PC-9 (cell line): ENCODE measurements at regions of chr13 and their contacts with region 1.

Region 1: DNA sequence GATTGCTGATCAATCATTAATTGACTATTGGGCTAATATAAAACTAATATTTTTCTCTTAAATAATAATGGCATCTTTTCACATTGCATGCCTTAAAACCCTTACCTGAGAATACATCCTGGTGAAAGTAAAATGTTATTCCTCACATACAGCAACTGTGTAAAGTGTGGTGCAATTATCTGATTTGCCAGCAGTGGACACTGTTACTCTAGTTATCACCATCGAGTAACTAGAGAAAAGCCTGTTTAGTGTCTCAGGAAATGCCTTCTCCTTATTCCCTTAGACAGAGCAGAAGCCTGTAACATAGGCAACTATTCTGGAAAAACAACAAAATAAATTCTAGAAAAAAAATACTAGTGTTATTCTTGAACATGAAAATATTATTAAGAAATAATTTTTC is 459.8 kb downstream of the FGF14 start:
- DNase-seq: peak in 1 of 2 experiments; percentile 45
- H3K4me3 ChIP-seq: no peak overlapping the region
- H3K27ac ChIP-seq: no peak overlapping the region
- H3K4me1 ChIP-seq: no peaks in the 10 kb centered on the region
- H3K27me3 ChIP-seq: peaks cover 9% of the 10 kb centered on the region; the same call in 1 of the 2 replicates
- CTCF ChIP-seq: peak; percentile 77

Region 2: GRCh38 chr13:102003848-102004570 is 62.0 kb after region 1 on chr13:
- CTCF ChIA-PET with region 1: no interaction called
- POLR2A ChIA-PET with region 1: no interaction called
- intact Hi-C with region 1: no loop called
- DNase-seq: peak in 1 of 2 experiments; percentile 1
- H3K4me3 ChIP-seq: no peak overlapping the region
- H3K27ac ChIP-seq: no peak overlapping the region
- H3K4me1 ChIP-seq: no peaks in the 10 kb centered on the region
- H3K27me3 ChIP-seq: peaks cover 17% of the 10 kb centered on the region
- CTCF ChIP-seq: no peak

Region 3: GRCh38 chr13:102317593-102317992 is 375.6 kb after region 1 on chr13:
- CTCF ChIA-PET with region 1: no interaction called
- POLR2A ChIA-PET with region 1: no interaction called
- intact Hi-C with region 1: no loop called
- DNase-seq: no peak
- H3K4me3 ChIP-seq: no peak overlapping the region
- H3K27ac ChIP-seq: no peak overlapping the region
- H3K4me1 ChIP-seq: no peaks in the 10 kb centered on the region
- H3K27me3 ChIP-seq: peaks cover 6% of the 10 kb centered on the region; the same call in 1 of the 2 replicates
- CTCF ChIP-seq: no peak

Region 4: GRCh38 chr13:102548811-102549210 is 606.8 kb after region 1 on chr13:
- CTCF ChIA-PET with region 1: no interaction called
- POLR2A ChIA-PET with region 1: no interaction called
- intact Hi-C with region 1: loop called (anchors 5 kb)
- DNase-seq: no peak
- H3K4me3 ChIP-seq: no peak overlapping the region
- H3K27ac ChIP-seq: no peak overlapping the region
- H3K4me1 ChIP-seq: no peaks in the 10 kb centered on the region
- H3K27me3 ChIP-seq: peaks cover 17% of the 10 kb centered on the region; the same call in 1 of the 2 replicates
- CTCF ChIP-seq: no peak